GM13977 (cell line): ENCODE measurements at regions of chr5 and their contacts with region 1.

Region 1: DNA sequence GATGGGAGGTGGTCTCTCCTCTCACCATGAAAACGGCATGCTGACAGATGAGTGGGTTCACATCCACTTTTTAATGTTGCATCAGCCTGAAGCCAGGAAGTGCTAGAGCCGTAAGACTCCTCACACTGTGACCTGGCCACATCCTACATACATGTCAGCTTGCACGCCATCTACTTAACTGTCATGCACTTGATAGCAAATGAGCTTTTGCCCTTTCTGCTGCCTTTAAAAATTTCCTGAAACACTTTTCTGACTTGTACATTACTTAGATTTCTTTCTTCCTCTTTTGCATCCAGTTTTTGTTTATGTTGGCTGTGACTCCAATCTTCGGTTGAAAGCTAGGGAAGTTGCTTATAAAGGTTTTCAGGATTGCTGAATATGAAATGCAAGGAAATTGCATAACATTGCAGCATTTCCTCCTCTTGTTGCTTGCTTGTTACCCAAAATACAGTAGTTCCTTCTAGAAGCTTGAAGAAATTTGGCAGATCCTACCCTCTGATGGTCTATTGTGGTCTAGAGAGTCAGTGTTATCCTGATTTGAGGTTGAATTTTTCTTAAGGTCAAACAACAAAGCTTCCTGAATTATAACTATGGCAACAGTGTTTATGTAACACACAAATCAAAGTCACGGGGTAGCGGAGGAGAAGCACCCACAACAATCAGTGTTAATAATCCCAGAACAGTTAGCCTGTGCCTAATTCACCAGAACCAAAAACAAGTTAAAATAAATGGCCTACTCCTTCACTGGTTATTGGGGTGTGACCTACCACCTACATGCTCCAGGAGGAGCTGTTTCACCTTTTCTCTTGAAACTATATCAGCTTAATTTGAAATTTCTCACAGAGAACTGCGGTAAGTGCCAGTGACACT is 232.5 kb downstream of the ARHGAP26 start:
- DNase-seq: peak; percentile 64
- CTCF ChIP-seq: peak; percentile 66

Region 2: DNA sequence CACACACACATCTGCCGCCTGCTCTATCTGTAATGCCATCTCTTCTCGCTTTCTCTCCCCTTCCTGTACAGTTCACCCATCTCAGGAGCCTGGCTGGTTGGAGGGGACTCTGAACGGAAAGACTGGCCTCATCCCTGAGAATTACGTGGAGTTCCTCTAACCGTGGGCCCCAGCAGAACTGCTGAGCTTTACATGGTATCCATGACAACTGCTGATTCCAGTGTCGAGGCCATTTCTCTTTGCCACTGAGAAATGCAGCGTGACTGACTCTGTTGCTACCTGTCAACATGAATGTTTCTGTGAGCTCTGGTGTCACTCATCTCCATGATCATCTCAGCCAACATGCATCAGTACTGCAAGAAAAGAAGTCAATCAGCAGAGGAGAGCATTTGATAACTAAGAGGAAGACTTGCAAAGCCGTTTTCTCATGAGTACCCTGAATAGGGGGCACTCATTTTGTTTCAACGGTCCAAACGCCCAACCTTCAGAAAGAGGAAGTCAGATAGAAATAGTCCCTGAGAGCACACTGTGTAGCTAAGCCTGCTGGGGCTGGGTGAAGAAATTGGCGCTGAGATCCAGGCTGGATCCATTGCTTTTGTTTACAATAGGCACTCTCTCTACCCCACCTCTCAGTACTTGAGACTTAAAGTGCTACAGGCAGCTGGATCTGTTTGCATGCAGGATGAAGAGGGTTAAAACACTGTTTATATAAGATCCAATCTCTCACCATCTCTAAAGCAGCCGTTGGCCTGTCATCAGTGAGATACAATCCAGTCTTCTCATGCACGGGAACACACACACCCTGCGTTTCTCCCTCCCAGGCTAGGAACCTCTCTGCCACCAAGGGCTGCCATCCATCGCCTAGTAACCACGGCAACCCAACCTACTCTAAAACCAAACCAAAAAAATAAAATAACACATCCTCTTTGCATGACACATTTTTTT is 219.9 kb after region 1 on chr5:
- in situ Hi-C with region 1: loop called (anchors 25 kb)
- DNase-seq: peak; percentile 55
- CTCF ChIP-seq: no peak

Region 3: GRCh38 chr5:143824851-143825720 is 822.4 kb after region 1 on chr5:
- in situ Hi-C with region 1: loop called (anchors 25 kb)
- DNase-seq: peak; percentile 56
- CTCF ChIP-seq: peak; percentile 94

Region 4: GRCh38 chr5:143968011-143968878 is 965.6 kb after region 1 on chr5:
- in situ Hi-C with region 1: loop called (anchors 10 kb)
- DNase-seq: peak; percentile 34
- CTCF ChIP-seq: peak; percentile 58